Testis (tissue), 5 donors: ENCODE measurements at regions of chr3 and their contacts with region 1.

Region 1: DNA sequence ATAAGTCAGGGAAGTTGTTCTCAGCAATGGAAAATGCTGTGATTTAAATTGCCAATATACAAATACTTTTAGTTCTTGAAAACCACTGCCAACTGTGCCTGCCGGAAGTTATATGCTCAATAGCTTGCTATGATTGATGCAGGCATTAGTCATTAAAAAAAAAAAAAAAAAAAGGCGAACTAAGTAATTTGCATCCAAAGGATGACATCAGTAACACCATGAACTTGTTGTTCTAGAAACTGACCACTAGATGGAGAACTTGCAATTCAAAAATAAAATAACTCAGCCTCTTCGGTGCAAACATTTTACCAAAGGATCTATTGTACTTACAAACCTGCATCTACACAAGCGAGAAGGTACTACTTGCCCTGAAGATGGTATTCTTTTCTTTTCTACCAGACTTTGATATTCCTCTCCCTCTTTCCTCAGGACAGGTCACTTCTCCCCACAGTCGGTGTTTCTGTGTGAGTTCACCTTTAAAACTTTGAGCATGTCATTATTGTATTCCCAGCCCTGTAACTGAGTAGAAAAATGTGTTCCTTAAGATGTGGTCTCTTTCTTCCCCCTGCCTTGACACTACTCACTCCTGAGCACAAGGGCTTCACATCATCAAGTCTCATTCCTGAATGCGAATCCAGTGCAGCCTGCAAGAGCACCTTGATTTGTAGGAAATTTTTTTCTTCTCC is 115.0 kb upstream of the VEPH1 start:
- DNase-seq: no peak
- H3K4me3 ChIP-seq: no peak overlapping the region
- H3K27ac ChIP-seq: no peak overlapping the region
- H3K4me1 ChIP-seq: no peaks in the 10 kb centered on the region
- H3K27me3 ChIP-seq: no peaks in the 10 kb centered on the region
- CTCF ChIP-seq: peak; percentile 58 to 72 (median 60)
- POLR2A ChIP-seq: no peak

Region 2: DNA sequence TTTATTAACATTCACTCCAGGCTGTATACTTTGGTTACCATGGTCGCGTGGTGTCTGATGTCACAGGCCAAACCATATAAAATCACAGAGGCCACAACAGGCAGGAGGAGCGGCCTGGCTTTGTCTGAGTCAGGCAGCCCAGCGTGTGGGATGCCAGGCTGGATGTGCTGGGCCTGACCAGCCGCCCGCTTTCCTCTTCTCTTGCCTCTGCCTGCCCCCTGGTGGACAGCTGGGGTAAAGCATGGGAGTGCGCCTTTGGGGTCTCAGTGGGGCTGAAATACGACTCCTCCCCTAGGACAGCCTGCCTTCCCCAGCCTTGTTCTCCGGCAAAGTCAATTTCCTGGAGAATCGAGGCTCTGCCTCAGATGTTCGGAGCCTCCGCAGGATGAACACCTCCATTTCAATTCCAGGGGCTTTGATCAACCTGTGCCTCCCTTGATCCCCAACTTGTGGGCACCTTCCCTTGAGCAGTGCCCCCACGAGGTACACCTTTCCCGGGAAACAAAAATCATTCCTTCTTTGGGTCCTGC is 536.5 kb before region 1 on chr3:
- intact Hi-C with region 1: no loop called
- DNase-seq: peak; percentile 94
- H3K4me3 ChIP-seq: no peak overlapping the region
- H3K27ac ChIP-seq: no peak overlapping the region
- H3K4me1 ChIP-seq: peaks cover 12% of the 10 kb centered on the region
- H3K27me3 ChIP-seq: no peaks in the 10 kb centered on the region
- CTCF ChIP-seq: peak; percentile 97 to 98 (median 98)
- POLR2A ChIP-seq: no peak

Region 3: GRCh38 chr3:157354722-157355121 is 263.5 kb before region 1 on chr3:
- intact Hi-C with region 1: no loop called
- DNase-seq: peak; percentile 34
- H3K4me3 ChIP-seq: no peak overlapping the region
- H3K27ac ChIP-seq: no peak overlapping the region
- H3K4me1 ChIP-seq: no peaks in the 10 kb centered on the region
- H3K27me3 ChIP-seq: no peaks in the 10 kb centered on the region
- CTCF ChIP-seq: peak in 2 of 3 experiments; percentile 18 to 52
- POLR2A ChIP-seq: no peak

Region 4: DNA sequence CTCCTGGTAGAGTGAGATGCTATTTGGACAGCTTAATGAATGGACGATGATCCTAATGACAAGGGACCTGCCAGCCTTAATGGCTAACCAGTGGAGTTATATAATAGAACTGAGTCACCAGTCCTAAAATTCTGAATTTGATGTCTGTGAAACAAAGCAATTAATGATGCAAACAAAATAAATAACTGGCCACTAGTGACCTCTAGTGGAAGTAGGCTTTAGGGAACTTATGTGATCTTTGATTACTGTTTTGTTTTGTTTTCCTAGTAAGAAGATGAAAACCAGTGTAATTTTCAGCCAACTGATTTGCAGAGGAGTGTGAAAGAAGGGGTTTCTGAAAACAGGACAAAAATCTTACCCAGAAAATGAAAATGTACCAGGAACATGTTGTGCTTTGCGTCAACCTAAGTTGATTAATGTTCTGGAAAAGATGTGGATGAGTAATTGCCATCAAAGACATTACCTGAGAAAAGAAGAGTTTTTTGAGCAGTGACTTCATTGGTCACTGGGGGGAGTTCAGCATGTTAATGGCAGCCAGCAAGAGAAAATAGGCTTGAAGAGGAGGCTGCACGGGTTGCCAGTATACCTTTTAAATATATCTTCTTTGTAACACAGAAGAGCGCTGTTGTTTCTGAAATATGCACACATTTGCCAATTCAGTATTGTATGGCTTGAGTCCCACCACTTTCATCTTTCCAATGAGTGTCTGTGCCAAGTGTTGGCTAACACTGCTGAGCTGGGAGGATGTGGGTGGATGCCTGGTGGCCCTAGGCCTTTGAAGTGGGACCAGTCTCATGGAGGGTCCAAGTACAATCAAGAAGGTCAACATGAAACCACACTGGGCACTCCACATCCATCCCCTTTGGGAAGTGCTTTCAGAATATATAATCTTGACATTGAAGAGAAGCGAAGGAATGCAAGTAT is 124.3 kb before region 1 on chr3:
- intact Hi-C with region 1: no loop called
- DNase-seq: no peak
- H3K4me3 ChIP-seq: no peak overlapping the region
- H3K27ac ChIP-seq: no peak overlapping the region
- H3K4me1 ChIP-seq: no peaks in the 10 kb centered on the region
- H3K27me3 ChIP-seq: no peaks in the 10 kb centered on the region
- CTCF ChIP-seq: peak; percentile 37 to 61 (median 48)
- POLR2A ChIP-seq: no peak

Region 5: GRCh38 chr3:157551961-157552360 is 66.3 kb before region 1 on chr3:
- intact Hi-C with region 1: no loop called
- DNase-seq: no peak
- H3K4me3 ChIP-seq: no peak overlapping the region
- H3K27ac ChIP-seq: no peak overlapping the region
- H3K4me1 ChIP-seq: no peaks in the 10 kb centered on the region
- H3K27me3 ChIP-seq: no peaks in the 10 kb centered on the region
- CTCF ChIP-seq: no peak
- POLR2A ChIP-seq: no peak

Region 6: DNA sequence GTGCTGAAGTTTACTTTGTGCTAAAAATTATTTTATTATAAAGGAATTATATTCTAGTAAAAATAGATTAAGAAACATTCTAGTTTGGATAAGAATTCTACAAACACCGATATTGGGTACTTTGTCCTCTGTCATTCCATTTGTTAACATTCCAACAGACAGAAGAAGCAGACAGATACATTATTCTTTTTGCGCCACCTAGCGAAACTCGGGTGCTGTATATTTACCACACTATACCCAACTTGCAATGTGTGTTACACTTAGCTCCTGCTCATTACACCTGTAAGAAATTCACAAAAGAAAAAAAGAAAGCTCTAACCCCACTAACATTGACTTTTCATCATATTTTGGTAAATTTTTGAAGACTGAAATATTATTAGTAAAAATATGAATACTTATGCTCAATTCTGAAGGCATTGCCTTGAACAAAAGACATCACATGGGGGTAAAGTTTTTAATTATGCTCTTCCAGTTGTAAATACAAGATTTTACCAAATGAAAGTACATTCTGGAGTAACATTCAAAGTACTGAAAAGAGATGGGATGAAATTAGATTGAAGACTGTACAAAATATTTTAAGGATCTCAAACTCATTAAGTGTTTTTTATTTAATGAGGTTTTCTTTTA is 816.3 kb after region 1 on chr3:
- intact Hi-C with region 1: loop called (anchors 10 kb)
- DNase-seq: peak; percentile 86
- H3K4me3 ChIP-seq: no peak overlapping the region
- H3K27ac ChIP-seq: no peak overlapping the region
- H3K4me1 ChIP-seq: no peaks in the 10 kb centered on the region
- H3K27me3 ChIP-seq: no peaks in the 10 kb centered on the region
- CTCF ChIP-seq: peak; percentile 48 to 66 (median 54)
- POLR2A ChIP-seq: no peak